ENCODE measurements at regions of chr5 and their contacts with region 1.

Region 1: GRCh38 chr5:54517174-54518092 is at the start of gene SNX18:
- DNase-seq: peak; percentile 91 to 93 (median 93)
- H3K4me3 ChIP-seq: peak within 1 kb of the TSS; percentile 44 to 62
- H3K4me3 Mint-ChIP-seq: peak within 1 kb of the TSS; percentile 83 to 93 (median 90)
- H3K27ac ChIP-seq: peak within 1 kb of the TSS; percentile 63
- H3K27ac Mint-ChIP-seq: peak within 1 kb of the TSS; percentile 32 to 81 (median 57)
- H3K4me1 ChIP-seq: peaks cover 40% of the 10 kb centered on the region
- H3K4me1 Mint-ChIP-seq: peaks cover 4 to 31% (median 16%) of the 10 kb centered on the region in 4 donors
- H3K27me3 ChIP-seq: no peaks in the 10 kb centered on the region
- H3K27me3 Mint-ChIP-seq: no peaks in the 10 kb centered on the region
- total RNA-seq, gene SNX18: 27.9 to 31.4 TPM

Region 2: DNA sequence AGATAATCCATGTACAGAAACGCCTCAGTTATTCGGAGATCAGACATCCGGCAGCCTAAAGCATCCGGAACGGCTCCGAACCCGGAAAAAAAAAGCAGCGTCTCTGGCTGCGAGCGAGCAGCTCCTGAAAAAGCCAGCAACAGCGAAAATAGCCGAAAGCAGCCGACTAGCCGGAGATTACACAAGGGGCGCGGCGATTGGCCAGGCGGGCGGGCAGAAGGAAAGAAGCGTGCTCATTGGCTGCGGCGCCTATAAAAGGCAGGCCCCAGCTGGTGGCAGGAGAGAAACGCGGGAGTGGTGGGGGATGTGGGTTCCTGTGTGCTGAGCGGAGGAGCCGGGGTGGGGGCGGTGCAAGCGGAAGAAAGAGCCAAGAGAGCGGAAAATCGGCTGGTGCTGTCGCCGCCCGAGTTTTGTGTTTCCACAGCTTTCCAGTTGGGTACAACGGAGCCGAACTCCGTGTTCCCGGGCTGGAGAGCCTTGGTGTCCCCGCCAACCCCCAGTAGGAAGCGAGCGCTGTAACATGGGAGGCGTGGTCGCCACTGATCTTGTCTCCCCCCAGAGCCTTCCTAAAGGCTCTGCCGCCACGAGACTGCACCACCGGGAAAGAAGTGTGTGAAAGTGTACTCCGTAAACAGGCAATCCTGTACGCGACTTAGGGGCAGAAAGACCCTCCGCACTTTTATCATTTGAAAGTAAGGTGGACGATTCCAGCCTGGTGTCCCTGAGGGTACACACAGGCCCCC is 206.8 kb before region 1 on chr5 and contains the start of gene ARL15:
- CTCF ChIA-PET with region 1: interaction called, 3 read pairs
- POLR2A ChIA-PET with region 1: interaction called, 5 read pairs
- intact Hi-C with region 1: loop called (anchors 1 kb)
- DNase-seq: peak; percentile 98
- H3K4me3 ChIP-seq: peak within 1 kb of the TSS; percentile 84 to 96
- H3K4me3 Mint-ChIP-seq: peak within 1 kb of the TSS; percentile 91 to 99 (median 97)
- H3K27ac ChIP-seq: peak within 1 kb of the TSS; percentile 86
- H3K27ac Mint-ChIP-seq: peak within 1 kb of the TSS; percentile 94 to 98 (median 96)
- H3K4me1 ChIP-seq: peaks cover 16% of the 10 kb centered on the region
- H3K4me1 Mint-ChIP-seq: peaks cover 12 to 35% (median 26%) of the 10 kb centered on the region in 4 donors
- H3K27me3 ChIP-seq: no peaks in the 10 kb centered on the region
- H3K27me3 Mint-ChIP-seq: peaks cover 7 to 8% of the 10 kb centered on the region in 2 donors
- total RNA-seq, gene ARL15: 14.1 to 15.3 TPM

Region 3: GRCh38 chr5:54637654-54638053 is 120.2 kb after region 1 on chr5:
- CTCF ChIA-PET with region 1: interaction called, 7 read pairs
- POLR2A ChIA-PET with region 1: interaction called, 14 read pairs
- intact Hi-C with region 1: no loop called
- DNase-seq: peak in 1 of 5 donors; percentile 6
- H3K4me3 ChIP-seq: no peak overlapping the region
- H3K4me3 Mint-ChIP-seq: peak overlapping the region in 6 of 8 donors; percentile 26 to 75 (median 54)
- H3K27ac ChIP-seq: no peak overlapping the region
- H3K27ac Mint-ChIP-seq: peak overlapping the region in 5 of 7 donors; percentile 46 to 78 (median 73)
- H3K4me1 ChIP-seq: peaks cover 25% of the 10 kb centered on the region
- H3K4me1 Mint-ChIP-seq: peaks cover 15 to 30% (median 24%) of the 10 kb centered on the region in 4 donors
- H3K27me3 ChIP-seq: no peaks in the 10 kb centered on the region
- H3K27me3 Mint-ChIP-seq: no peaks in the 10 kb centered on the region

Region 4: GRCh38 chr5:54673523-54674225 is 156.2 kb after region 1 on chr5:
- CTCF ChIA-PET with region 1: no interaction called
- POLR2A ChIA-PET with region 1: interaction called, 17 read pairs
- intact Hi-C with region 1: no loop called
- DNase-seq: peak; percentile 35 to 67 (median 40)
- H3K4me3 ChIP-seq: no peak overlapping the region
- H3K4me3 Mint-ChIP-seq: peak overlapping the region in 7 of 8 donors; percentile 3 to 70 (median 51)
- H3K27ac ChIP-seq: no peak overlapping the region
- H3K27ac Mint-ChIP-seq: peak overlapping the region; percentile 0 to 78 (median 24)
- H3K4me1 ChIP-seq: peaks cover 40% of the 10 kb centered on the region
- H3K4me1 Mint-ChIP-seq: peaks cover 39 to 66% (median 54%) of the 10 kb centered on the region in 4 donors
- H3K27me3 ChIP-seq: no peaks in the 10 kb centered on the region
- H3K27me3 Mint-ChIP-seq: no peaks in the 10 kb centered on the region

Region 5: DNA sequence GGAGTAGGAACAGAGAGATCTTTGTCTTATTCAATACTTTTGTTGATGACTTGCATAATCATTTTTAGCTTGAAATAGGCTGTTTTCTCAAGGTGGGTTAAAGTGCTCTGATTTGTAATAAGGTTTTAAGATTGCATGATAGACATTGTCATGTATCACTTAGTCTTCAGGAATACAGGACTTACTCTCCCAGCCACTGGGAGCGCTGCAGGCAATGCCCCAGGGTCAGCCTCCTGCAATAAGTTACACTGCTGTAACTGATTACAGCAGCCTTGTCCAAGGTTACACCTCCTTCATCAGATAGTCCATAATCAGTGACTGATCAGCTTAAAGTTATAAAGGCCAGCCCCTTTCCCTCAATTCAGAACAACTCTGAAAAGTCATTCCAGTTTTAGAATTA is 249.3 kb after region 1 on chr5:
- CTCF ChIA-PET with region 1: interaction called, 27 read pairs
- POLR2A ChIA-PET with region 1: interaction called, 14 read pairs
- intact Hi-C with region 1: loop called (anchors 1 kb)
- DNase-seq: no peak
- H3K4me3 ChIP-seq: no peak overlapping the region
- H3K4me3 Mint-ChIP-seq: no peak overlapping the region
- H3K27ac ChIP-seq: no peak overlapping the region
- H3K27ac Mint-ChIP-seq: peak overlapping the region in 1 of 7 donors; percentile 49
- H3K4me1 ChIP-seq: no peaks in the 10 kb centered on the region
- H3K4me1 Mint-ChIP-seq: no peaks in the 10 kb centered on the region
- H3K27me3 ChIP-seq: no peaks in the 10 kb centered on the region
- H3K27me3 Mint-ChIP-seq: no peaks in the 10 kb centered on the region

Region 6: GRCh38 chr5:54844905-54845566 is 327.6 kb after region 1 on chr5:
- CTCF ChIA-PET with region 1: interaction called, 181 read pairs
- POLR2A ChIA-PET with region 1: interaction called, 74 read pairs
- intact Hi-C with region 1: loop called (anchors 1 kb)
- DNase-seq: peak in 4 of 5 donors; percentile 54 to 63 (median 56)
- H3K4me3 ChIP-seq: no peak overlapping the region
- H3K4me3 Mint-ChIP-seq: peak overlapping the region in 5 of 8 donors; percentile 9 to 68 (median 49)
- H3K27ac ChIP-seq: no peak overlapping the region
- H3K27ac Mint-ChIP-seq: peak overlapping the region in 2 of 7 donors; percentile 12 to 26
- H3K4me1 ChIP-seq: no peaks in the 10 kb centered on the region
- H3K4me1 Mint-ChIP-seq: peaks cover 0 to 4% (median 2%) of the 10 kb centered on the region in 4 donors
- H3K27me3 ChIP-seq: no peaks in the 10 kb centered on the region
- H3K27me3 Mint-ChIP-seq: peaks cover 0 to 9% of the 10 kb centered on the region in 2 donors

Region 7: GRCh38 chr5:55146543-55147151 is 629.2 kb after region 1 on chr5:
- CTCF ChIA-PET with region 1: interaction called, 3 read pairs
- POLR2A ChIA-PET with region 1: no interaction called
- intact Hi-C with region 1: loop called (anchors 1 kb)
- DNase-seq: peak; percentile 77 to 83 (median 80)
- H3K4me3 ChIP-seq: no peak overlapping the region
- H3K4me3 Mint-ChIP-seq: peak overlapping the region in 7 of 8 donors; percentile 11 to 70 (median 48)
- H3K27ac ChIP-seq: no peak overlapping the region
- H3K27ac Mint-ChIP-seq: no peak overlapping the region
- H3K4me1 ChIP-seq: peaks cover 18% of the 10 kb centered on the region
- H3K4me1 Mint-ChIP-seq: peaks cover 12 to 25% (median 15%) of the 10 kb centered on the region in 4 donors
- H3K27me3 ChIP-seq: no peaks in the 10 kb centered on the region
- H3K27me3 Mint-ChIP-seq: peaks cover 0 to 3% of the 10 kb centered on the region in 2 donors